Activated CD8-positive, alpha-beta T cell treated with anti-CD3 and anti-CD28 coated beads, Interleukin-2, amount 10 ng/mL, durations not matched to agents 7 days and 5 days (primary cell): ENCODE measurements at regions of chr2 and their contacts with region 1.

Region 1: GRCh38 chr2:234500394-234501006 is 3.6 kb upstream of the ARL4C start:
- DNase-seq: peak; percentile 84
- ATAC-seq: peak; percentile 40
- H3K4me3 Mint-ChIP-seq: no peak overlapping the region
- H3K27ac Mint-ChIP-seq: no peak overlapping the region
- H3K4me1 Mint-ChIP-seq: peaks cover 31% of the 10 kb centered on the region
- H3K27me3 Mint-ChIP-seq: peaks cover 16% of the 10 kb centered on the region

Region 2: DNA sequence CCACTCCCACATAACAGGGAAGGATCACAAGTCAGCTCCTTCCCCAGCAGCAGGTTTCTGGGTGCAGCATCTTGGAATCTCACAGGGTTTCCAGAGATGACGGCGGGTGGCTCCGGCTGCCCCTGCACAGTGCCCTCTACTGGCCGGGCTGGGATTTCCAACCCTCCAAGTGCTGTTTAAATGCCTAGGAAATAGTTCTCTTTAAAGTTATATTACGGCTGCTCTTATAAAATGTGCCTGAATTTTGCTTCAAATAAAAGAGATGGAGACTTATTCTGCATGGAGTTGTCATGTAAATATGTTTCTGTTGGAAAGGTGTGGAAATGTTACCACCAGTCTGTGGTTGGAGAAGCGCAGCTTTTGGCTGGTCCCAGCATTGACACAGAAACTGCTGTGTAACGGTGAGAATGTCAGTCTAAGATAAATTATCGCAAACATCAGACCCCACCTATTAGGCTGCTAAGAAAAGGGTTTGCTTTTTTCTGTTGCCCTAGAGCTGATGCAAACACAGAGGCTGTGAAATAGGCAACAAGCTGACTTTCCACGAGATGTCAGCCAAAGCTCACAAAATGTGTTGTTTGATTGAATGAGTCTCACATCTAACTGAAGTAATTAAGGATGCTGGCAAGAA is 642.9 kb before region 1 on chr2:
- CTCF ChIA-PET with region 1: interaction called, 13 read pairs
- POLR2A ChIA-PET with region 1: interaction called, 5 read pairs
- DNase-seq: peak; percentile 71
- ATAC-seq: no peak
- H3K4me3 Mint-ChIP-seq: no peak overlapping the region
- H3K27ac Mint-ChIP-seq: no peak overlapping the region
- H3K4me1 Mint-ChIP-seq: peaks cover 30% of the 10 kb centered on the region
- H3K27me3 Mint-ChIP-seq: peaks cover 7% of the 10 kb centered on the region

Region 3: DNA sequence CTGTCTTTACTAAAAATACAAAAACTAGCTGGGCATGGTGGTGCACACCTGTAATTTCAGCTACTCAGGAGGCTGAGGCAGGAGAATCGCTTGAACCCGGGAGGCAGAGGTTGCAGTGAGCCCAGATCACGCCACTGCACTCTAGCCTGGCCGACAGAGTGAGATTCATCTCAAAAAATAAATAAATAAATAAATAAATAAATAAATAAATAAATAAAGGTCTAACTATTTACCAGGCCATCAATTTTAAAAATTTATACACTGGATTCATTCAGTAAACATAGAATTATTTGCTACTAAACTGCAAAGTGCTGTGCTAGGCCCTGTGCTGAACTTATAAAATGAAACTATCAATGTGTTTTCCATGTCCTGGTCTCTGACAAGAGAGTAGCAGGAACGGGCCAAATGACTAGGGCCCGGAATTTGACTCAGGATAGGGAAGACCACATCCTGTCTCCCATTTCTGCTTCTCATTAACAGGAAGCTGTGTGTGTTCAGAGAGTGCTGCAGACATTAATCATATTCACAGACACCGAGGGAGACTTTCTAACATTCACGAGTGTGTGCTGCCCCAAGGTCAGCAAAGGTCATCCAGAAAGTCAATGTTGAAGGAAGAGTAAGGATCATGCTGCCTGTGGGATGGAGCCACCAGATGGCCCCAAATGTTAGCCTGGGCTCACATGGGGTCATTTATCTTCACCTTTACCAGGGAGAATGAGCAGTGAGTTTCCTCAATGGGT is 354.2 kb before region 1 on chr2:
- CTCF ChIA-PET with region 1: interaction called, 10 read pairs
- POLR2A ChIA-PET with region 1: interaction called, 5 read pairs
- DNase-seq: no peak
- ATAC-seq: no peak
- H3K4me3 Mint-ChIP-seq: no peak overlapping the region
- H3K27ac Mint-ChIP-seq: peak overlapping the region; percentile 62
- H3K4me1 Mint-ChIP-seq: peaks cover 29% of the 10 kb centered on the region
- H3K27me3 Mint-ChIP-seq: peaks cover 3% of the 10 kb centered on the region

Region 4: GRCh38 chr2:234425619-234426603 is 74.6 kb before region 1 on chr2:
- CTCF ChIA-PET with region 1: interaction called, 9 read pairs
- POLR2A ChIA-PET with region 1: interaction called, 99 read pairs
- DNase-seq: peak; percentile 88
- ATAC-seq: peak; percentile 88
- H3K4me3 Mint-ChIP-seq: peak overlapping the region; percentile 56
- H3K27ac Mint-ChIP-seq: peak overlapping the region; percentile 97
- H3K4me1 Mint-ChIP-seq: peaks cover 87% of the 10 kb centered on the region
- H3K27me3 Mint-ChIP-seq: no peaks in the 10 kb centered on the region

Region 5: DNA sequence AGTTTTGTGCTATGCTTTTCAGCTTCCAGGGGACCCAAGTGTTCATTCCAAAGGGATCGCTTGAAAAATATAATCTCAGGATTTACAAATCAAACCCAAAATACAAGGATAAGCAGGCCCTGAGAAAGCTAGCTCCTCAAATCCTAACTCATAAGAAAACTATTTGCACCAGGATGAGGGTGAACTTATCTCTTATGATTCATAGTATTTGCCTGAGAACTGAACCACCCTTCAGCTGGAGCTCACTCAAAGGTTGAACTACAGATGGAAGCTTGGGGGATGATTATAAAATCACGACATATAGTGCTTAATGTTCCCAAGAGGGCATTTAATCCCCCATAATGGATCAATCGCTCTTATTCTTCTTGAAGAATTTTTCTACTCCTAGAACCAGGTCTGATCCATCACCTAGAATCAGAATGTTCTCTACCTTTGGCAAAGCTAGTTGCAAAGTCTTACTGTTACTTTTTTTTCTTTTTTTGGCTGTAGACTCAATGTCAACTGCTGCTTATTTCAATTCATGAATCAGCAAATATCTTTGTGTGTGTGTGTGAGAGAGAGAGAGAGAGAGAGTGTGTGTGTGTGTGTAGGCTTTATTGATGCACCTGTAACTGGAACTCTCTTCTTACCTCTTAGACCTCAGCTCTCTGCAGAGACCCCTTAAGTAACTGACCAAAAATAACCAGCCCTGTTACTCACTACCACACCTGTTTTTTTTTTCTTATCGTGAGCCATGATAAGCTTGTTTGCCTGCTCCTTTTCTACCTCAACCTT is 48.5 kb before region 1 on chr2:
- CTCF ChIA-PET with region 1: interaction called, 23 read pairs
- POLR2A ChIA-PET with region 1: interaction called, 220 read pairs
- DNase-seq: no peak
- ATAC-seq: peak; percentile 7
- H3K4me3 Mint-ChIP-seq: peak overlapping the region; percentile 85
- H3K27ac Mint-ChIP-seq: peak overlapping the region; percentile 92
- H3K4me1 Mint-ChIP-seq: peaks cover 86% of the 10 kb centered on the region
- H3K27me3 Mint-ChIP-seq: no peaks in the 10 kb centered on the region

Region 6: DNA sequence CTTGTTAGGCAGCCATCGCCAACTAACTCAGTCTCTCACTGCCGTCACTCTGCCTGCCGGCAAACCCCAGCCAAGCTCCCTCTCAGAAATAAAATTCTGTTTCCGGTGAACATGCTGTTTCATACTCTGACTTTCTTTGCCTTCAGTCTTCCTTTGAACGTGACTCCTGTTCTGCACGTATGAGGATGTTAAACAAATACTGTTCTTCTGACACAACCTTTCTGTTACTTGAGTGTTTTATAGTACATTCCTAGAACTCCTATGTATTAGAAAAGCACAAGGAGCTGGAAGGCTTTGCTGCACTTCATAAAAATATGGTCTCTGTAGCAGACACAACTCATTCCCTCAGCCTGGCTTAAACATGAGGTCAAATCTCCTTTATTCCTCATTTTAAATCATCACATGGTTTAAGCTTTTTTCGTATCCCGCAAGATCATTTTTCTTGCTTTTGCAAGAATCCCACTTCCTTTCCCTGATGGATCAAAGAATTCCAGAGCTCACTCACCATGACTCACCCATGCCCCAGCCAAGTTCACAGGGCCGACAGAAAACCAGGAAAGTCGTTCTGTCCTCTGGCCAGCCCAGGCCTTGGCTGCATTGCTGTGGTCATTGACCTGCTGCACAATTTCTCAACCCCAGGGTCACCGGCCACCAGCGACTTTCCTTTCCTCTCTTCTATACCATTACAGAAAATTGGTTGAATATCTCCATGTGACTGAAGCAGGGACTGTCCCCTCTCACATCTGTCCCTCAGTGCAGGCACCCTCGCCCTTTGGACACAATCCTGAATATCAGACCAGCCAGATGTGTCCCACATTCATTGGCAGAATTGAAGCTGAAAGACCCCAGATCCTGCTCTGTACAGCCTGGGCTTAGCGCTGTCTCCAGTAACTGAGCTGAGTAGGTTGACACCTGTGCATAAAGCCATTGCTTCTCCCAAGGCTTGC is 179.5 kb after region 1 on chr2:
- CTCF ChIA-PET with region 1: no interaction called
- POLR2A ChIA-PET with region 1: no interaction called
- DNase-seq: no peak
- ATAC-seq: no peak
- H3K4me3 Mint-ChIP-seq: no peak overlapping the region
- H3K27ac Mint-ChIP-seq: no peak overlapping the region
- H3K4me1 Mint-ChIP-seq: no peaks in the 10 kb centered on the region
- H3K27me3 Mint-ChIP-seq: peaks cover 12% of the 10 kb centered on the region